Gastrocnemius medialis (tissue), 4 donors: ENCODE measurements at regions of chr14 and their contacts with region 1.

Region 1: GRCh38 chr14:35140718-35141581 is 18.6 kb downstream of the PRORP start:
- DNase-seq: no peak
- ATAC-seq: no peak
- H3K4me3 ChIP-seq: no peak overlapping the region
- H3K27ac ChIP-seq: no peak overlapping the region
- H3K4me1 ChIP-seq: no peaks in the 10 kb centered on the region
- H3K27me3 ChIP-seq: no peaks in the 10 kb centered on the region
- CTCF ChIP-seq: peak in 3 of 5 experiments; percentile 33 to 52 (median 50)
- POLR2A ChIP-seq: no peak

Region 2: GRCh38 chr14:35229495-35230089 is 88.6 kb after region 1 on chr14:
- in situ Hi-C with region 1: no loop called
- intact Hi-C with region 1: loop called (anchors 10 kb)
- DNase-seq: no peak
- ATAC-seq: no peak
- H3K4me3 ChIP-seq: no peak overlapping the region
- H3K27ac ChIP-seq: no peak overlapping the region
- H3K4me1 ChIP-seq: peaks cover 0 to 1% of the 10 kb centered on the region in 2 donors
- H3K27me3 ChIP-seq: no peaks in the 10 kb centered on the region
- CTCF ChIP-seq: peak in 3 of 5 experiments; percentile 19 to 38 (median 29)
- POLR2A ChIP-seq: no peak